Panc1 (cell line): ENCODE measurements at regions of chr4 and their contacts with region 1.

Region 1: DNA sequence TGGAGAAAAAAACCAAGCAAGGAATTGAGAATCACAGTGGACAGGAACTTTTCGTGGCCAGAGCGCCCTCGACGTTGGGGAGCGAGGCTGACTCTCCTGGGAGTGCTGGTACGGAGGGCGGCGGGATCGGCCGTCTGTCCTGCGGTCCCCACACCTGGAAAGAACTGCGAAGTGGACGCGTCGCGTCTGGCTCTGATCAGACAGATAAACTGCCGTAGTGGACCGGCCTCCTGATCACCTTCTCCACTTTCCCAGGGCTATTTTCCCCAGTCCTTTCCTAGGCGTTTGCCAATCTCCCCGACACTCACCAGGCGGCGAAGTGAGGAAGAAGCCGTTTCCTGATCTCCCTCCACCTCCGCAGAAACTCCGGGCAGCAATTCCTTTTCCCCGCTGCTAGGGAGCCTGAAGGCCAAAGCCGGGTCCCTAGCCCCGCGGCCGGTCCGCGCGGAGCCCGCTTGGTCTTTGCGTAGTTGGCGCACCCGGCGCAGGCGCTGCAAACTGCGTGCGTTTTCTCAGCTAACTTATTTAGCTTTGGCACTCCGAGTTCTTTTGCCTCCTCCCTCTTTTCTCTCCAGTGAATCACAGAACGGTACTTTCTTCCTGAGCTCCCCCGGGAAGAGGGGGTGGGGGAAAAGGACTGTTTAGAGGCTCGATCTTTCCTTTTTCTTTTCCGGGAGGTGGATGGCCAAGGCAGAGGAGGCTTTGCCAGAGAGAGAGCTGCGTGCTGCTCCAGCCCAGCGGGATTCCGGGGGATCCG is at the start of gene ARSJ:
- DNase-seq: no peak
- ATAC-seq: peak; percentile 79
- H3K4me3 ChIP-seq: peak within 1 kb of the TSS; percentile 77 to 85
- H3K27ac ChIP-seq: peak within 1 kb of the TSS; percentile 96
- H3K4me1 ChIP-seq: peaks cover 7% of the 10 kb centered on the region
- H3K27me3 ChIP-seq: no peaks in the 10 kb centered on the region
- CTCF ChIP-seq: no peak
- total RNA-seq, gene ARSJ: 43.9 TPM

Region 2: GRCh38 chr4:114072781-114073180 is 93.5 kb after region 1 on chr4:
- CTCF ChIA-PET with region 1: no interaction called
- POLR2A ChIA-PET with region 1: no interaction called
- in situ Hi-C with region 1: no loop called
- intact Hi-C with region 1: loop called (anchors 5 kb)
- DNase-seq: no peak
- ATAC-seq: no peak
- H3K4me3 ChIP-seq: no peak overlapping the region
- H3K27ac ChIP-seq: no peak overlapping the region
- H3K4me1 ChIP-seq: no peaks in the 10 kb centered on the region
- H3K27me3 ChIP-seq: no peaks in the 10 kb centered on the region
- CTCF ChIP-seq: no peak

Region 3: GRCh38 chr4:114378306-114378903 is 399.1 kb after region 1 on chr4:
- CTCF ChIA-PET with region 1: interaction called, 11 read pairs
- POLR2A ChIA-PET with region 1: no interaction called
- in situ Hi-C with region 1: no loop called
- intact Hi-C with region 1: no loop called
- DNase-seq: no peak
- ATAC-seq: no peak
- H3K4me3 ChIP-seq: no peak overlapping the region
- H3K27ac ChIP-seq: no peak overlapping the region; the same call in 1 of the 2 replicates
- H3K4me1 ChIP-seq: no peaks in the 10 kb centered on the region
- H3K27me3 ChIP-seq: no peaks in the 10 kb centered on the region
- CTCF ChIP-seq: peak; percentile 69; the same call in 1 of the 2 replicates

Region 4: GRCh38 chr4:114423582-114423981 is 444.3 kb after region 1 on chr4:
- CTCF ChIA-PET with region 1: no interaction called
- POLR2A ChIA-PET with region 1: interaction called, 11 read pairs
- in situ Hi-C with region 1: no loop called
- intact Hi-C with region 1: no loop called
- DNase-seq: no peak
- ATAC-seq: no peak
- H3K4me3 ChIP-seq: no peak overlapping the region
- H3K27ac ChIP-seq: no peak overlapping the region
- H3K4me1 ChIP-seq: no peaks in the 10 kb centered on the region
- H3K27me3 ChIP-seq: no peaks in the 10 kb centered on the region
- CTCF ChIP-seq: no peak